Heart left ventricle (tissue), 16 donors: ENCODE measurements at regions of chr7 and their contacts with region 1.

Region 1: GRCh38 chr7:108503112-108504026 is 22.6 kb downstream of the PNPLA8 start:
- DNase-seq: no peak
- ATAC-seq: peak in 2 of 4 donors; percentile 20 to 69
- H3K4me3 ChIP-seq: no peak overlapping the region
- H3K27ac ChIP-seq: peak overlapping the region in 1 of 12 donors; percentile 7
- H3K4me1 ChIP-seq: peaks cover 0 to 11% (median 0%) of the 10 kb centered on the region in 12 donors
- H3K27me3 ChIP-seq: no peaks in the 10 kb centered on the region
- CTCF ChIP-seq: no peak
- POLR2A ChIP-seq: no peak

Region 2: DNA sequence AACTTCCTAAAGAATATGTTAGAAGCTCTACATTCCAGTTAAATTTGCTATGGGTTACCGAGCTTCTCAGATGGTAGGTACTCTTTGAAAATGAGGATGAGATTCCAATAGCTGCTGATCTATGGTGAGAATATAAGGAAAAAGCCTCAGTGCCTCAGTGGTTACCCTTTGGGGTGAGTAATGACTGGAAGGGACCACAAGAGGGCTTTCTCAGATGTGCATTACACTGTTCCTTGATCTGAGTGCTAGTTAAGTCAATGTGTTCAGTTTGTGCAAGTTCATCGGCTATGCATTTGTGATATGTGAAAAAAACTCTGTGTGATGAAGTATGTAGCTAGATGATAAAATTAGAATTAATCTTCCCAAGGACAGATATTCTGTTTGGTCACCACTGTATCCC is 50.6 kb before region 1 on chr7:
- intact Hi-C with region 1: loop called in 1 of 10 experiments (anchors 5 kb)
- DNase-seq: no peak
- ATAC-seq: no peak
- H3K4me3 ChIP-seq: no peak overlapping the region
- H3K27ac ChIP-seq: no peak overlapping the region
- H3K4me1 ChIP-seq: peaks cover 0 to 25% (median 16%) of the 10 kb centered on the region in 12 donors
- H3K27me3 ChIP-seq: peaks cover 7 to 65% (median 39%) of the 10 kb centered on the region in 9 donors
- CTCF ChIP-seq: peak in 6 of 12 donors; percentile 17 to 46 (median 30)
- POLR2A ChIP-seq: no peak